Mammary epithelial cell (primary cell): ENCODE measurements at regions of chr19 and their contacts with region 1.

Region 1: GRCh38 chr19:39532233-39533002 is at the start of gene EID2B:
- DNase-seq: peak; percentile 89
- H3K4me3 ChIP-seq: peak within 1 kb of the TSS; percentile 67 to 99 (median 78)
- H3K27ac ChIP-seq: peak within 1 kb of the TSS; percentile 46
- H3K4me1 ChIP-seq: peaks cover 7% of the 10 kb centered on the region
- H3K27me3 ChIP-seq: no peaks in the 10 kb centered on the region
- CTCF ChIP-seq: peak; percentile 98 to 100
- total RNA-seq, gene EID2B: 2.5 to 3.3 TPM

Region 2: GRCh38 chr19:39125554-39126311 is 406.7 kb before region 1 on chr19 and contains the start of gene PAK4:
- CTCF ChIA-PET with region 1: no interaction called
- dilution Hi-C with region 1: no loop called
- in situ Hi-C with region 1: no loop called
- intact Hi-C with region 1: loop called (anchors 1 kb)
- DNase-seq: peak; percentile 97
- H3K4me3 ChIP-seq: peak within 1 kb of the TSS; percentile 64 to 86 (median 80)
- H3K27ac ChIP-seq: peak within 1 kb of the TSS; percentile 65
- H3K4me1 ChIP-seq: peaks cover 13% of the 10 kb centered on the region
- H3K27me3 ChIP-seq: no peaks in the 10 kb centered on the region
- CTCF ChIP-seq: no peak
- total RNA-seq, gene PAK4: 8.8 to 45.1 TPM

Region 3: DNA sequence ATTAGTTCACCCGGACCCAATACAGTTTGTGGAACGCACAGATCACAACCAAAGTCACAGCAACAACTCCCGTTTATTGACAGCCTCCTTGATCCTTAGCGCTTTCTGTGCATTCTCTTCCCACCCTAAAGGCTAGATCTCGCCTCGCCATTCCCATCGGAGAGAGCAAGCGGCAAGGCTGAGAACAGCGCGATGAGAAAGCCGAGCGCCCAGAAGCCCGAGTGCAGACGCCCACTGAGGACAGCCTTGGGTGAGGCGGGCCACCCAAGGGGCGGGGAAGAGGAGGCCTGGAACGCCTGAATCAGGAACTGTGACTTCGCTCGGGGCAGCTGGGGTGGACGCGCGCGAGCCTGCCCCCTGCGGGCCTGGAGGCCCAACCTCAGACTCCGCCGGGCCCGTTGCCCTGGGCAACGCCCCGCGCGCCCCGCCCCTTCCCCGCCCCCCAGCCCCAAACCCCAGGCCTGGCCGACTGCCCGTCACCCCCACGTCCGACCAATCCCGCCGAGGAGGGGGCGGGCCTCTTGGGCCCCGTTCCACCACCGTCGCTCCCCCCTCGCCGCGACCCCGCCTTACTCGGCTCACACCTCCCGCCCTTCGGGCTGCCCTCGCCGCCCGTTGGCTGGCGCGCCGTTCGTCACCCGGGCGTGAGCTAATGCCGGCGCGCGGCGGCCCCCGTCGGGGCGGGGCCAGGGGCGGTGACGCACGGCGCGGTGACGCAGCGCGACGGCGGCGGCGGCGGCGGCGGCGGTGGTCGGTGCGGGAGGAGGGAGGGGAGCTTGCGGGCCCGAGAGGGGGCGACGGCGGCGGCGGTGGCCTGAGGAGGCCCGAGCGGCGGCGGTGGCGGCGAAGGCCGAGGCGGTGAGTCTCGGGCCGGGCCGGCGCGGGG is 190.5 kb before region 1 on chr19 and contains the start of gene SAMD4B:
- CTCF ChIA-PET with region 1: no interaction called
- dilution Hi-C with region 1: no loop called
- in situ Hi-C with region 1: no loop called
- intact Hi-C with region 1: loop called (anchors 5 kb)
- DNase-seq: peak; percentile 96
- H3K4me3 ChIP-seq: peak within 1 kb of the TSS; percentile 79 to 83 (median 80)
- H3K27ac ChIP-seq: peak within 1 kb of the TSS; percentile 81
- H3K4me1 ChIP-seq: peaks cover 6% of the 10 kb centered on the region
- H3K27me3 ChIP-seq: no peaks in the 10 kb centered on the region
- CTCF ChIP-seq: peak; percentile 32 to 71
- total RNA-seq, gene SAMD4B: 54.3 to 95.2 TPM

Region 4: GRCh38 chr19:39412100-39412866 is 120.1 kb before region 1 on chr19 and contains the start of gene PLEKHG2:
- CTCF ChIA-PET with region 1: no interaction called
- dilution Hi-C with region 1: no loop called
- in situ Hi-C with region 1: no loop called
- intact Hi-C with region 1: loop called (anchors 1 kb)
- DNase-seq: peak; percentile 99
- H3K4me3 ChIP-seq: peak within 1 kb of the TSS; percentile 70 to 93 (median 92)
- H3K27ac ChIP-seq: peak within 1 kb of the TSS; percentile 97
- H3K4me1 ChIP-seq: peaks cover 38% of the 10 kb centered on the region
- H3K27me3 ChIP-seq: no peaks in the 10 kb centered on the region
- CTCF ChIP-seq: peak; percentile 42 to 94
- total RNA-seq, gene PLEKHG2: 15.5 to 40.6 TPM

Region 5: DNA sequence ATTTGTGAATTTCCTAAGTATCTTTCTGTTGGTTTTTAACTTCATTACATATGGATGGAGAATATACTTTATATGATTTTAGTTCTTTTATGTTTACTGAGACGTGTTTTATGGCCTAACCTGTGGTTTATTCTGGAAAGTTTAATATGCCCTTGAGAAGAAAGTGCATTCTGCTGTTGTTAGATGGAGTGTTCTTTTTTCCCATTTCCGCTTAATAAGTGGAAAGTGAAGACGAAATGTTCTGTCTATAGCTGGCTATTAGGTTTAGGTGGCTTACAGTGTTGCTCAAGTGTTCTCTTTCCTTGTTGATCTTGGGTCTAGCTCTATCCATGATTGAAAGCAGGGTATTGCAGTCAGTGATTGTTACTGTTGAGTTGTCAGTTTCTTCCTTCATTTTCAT is 69.0 kb before region 1 on chr19:
- CTCF ChIA-PET with region 1: no interaction called
- dilution Hi-C with region 1: no loop called
- in situ Hi-C with region 1: no loop called
- intact Hi-C with region 1: no loop called
- DNase-seq: no peak
- H3K4me3 ChIP-seq: no peak overlapping the region
- H3K27ac ChIP-seq: no peak overlapping the region
- H3K4me1 ChIP-seq: no peaks in the 10 kb centered on the region
- H3K27me3 ChIP-seq: no peaks in the 10 kb centered on the region
- CTCF ChIP-seq: no peak

Region 6: DNA sequence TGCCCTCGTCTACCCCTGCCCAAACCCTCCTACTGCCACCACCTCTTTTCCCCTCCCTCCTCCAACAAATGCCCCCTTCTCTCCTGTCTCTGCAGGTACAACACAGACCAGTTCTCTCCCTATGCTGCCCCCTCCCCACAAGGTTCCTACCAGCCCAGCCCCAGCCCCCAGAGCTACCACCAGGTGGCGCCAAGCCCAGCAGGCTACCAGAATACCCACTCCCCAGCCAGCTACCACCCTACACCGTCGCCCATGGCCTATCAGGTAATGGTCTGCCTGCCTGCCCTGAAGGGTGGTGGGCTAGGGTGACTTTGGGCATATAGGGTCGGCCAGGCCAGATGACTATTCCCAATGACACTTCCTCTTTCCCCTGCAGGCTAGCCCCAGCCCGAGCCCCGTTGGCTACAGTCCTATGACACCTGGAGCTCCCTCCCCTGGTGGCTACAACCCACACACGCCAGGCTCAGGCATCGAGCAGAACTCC is 58.2 kb before region 1 on chr19:
- CTCF ChIA-PET with region 1: interaction called, 7 read pairs
- dilution Hi-C with region 1: loop called (anchors 10 kb)
- in situ Hi-C with region 1: no loop called
- intact Hi-C with region 1: loop called (anchors 1 kb)
- DNase-seq: no peak
- H3K4me3 ChIP-seq: no peak overlapping the region
- H3K27ac ChIP-seq: no peak overlapping the region
- H3K4me1 ChIP-seq: no peaks in the 10 kb centered on the region
- H3K27me3 ChIP-seq: no peaks in the 10 kb centered on the region
- CTCF ChIP-seq: peak; percentile 66 to 89

Region 7: DNA sequence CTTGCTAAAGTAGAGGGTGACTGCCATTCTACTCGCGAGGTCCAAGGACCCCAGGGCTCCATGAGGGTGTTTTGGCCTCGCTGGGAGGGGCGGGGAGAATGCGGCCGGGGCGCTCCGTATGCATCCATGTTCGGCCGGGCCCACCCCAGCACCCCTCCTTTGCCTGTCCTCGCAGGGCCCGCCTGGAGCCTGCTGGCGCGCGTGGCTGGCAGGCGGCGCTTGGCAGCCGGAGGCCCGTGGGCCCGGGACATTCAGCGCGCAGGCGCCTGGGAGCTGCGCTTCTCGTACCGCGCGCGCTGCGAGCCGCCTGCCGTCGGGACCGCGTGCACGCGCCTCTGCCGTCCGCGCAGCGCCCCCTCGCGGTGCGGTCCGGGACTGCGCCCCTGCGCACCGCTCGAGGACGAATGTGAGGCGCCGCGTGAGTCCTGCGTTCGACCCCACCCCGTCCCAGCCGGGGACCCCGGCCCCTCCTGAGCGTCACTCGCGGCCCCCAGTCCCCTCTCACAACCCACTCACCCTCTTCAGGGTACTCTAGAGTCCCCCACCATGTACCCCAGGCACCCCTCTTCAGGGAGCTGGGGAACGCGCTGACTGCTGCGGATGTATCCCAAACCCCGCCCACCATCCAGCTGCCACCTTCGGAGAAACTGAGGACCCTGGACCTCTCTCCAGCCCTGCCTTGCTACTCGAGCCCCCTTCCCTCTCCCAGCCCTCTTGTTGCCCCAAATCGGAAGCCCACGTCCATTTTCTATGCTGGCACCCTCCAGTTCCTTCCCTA is 29.6 kb before region 1 on chr19:
- CTCF ChIA-PET with region 1: no interaction called
- dilution Hi-C with region 1: no loop called
- in situ Hi-C with region 1: no loop called
- intact Hi-C with region 1: loop called (anchors 2 kb)
- DNase-seq: peak; percentile 53
- H3K4me3 ChIP-seq: no peak overlapping the region
- H3K27ac ChIP-seq: no peak overlapping the region
- H3K4me1 ChIP-seq: peaks cover 16% of the 10 kb centered on the region
- H3K27me3 ChIP-seq: peaks cover 16% of the 10 kb centered on the region
- CTCF ChIP-seq: peak; percentile 61 to 67